Activated CD4-positive, alpha-beta memory T cell treated with anti-CD3 and anti-CD28 coated beads for 36 hours (primary cell): ENCODE measurements at regions of chr9 and their contacts with region 1.

Region 1: GRCh38 chr9:128370826-128371621 is at the start of gene URM1:
- DNase-seq: peak; percentile 98
- H3K4me3 Mint-ChIP-seq: peak within 1 kb of the TSS; percentile 99
- H3K27ac Mint-ChIP-seq: peak within 1 kb of the TSS; percentile 93
- H3K4me1 Mint-ChIP-seq: peaks cover 27% of the 10 kb centered on the region
- H3K27me3 Mint-ChIP-seq: no peaks in the 10 kb centered on the region
- total RNA-seq, gene URM1: 45.9 to 50.0 TPM

Region 2: DNA sequence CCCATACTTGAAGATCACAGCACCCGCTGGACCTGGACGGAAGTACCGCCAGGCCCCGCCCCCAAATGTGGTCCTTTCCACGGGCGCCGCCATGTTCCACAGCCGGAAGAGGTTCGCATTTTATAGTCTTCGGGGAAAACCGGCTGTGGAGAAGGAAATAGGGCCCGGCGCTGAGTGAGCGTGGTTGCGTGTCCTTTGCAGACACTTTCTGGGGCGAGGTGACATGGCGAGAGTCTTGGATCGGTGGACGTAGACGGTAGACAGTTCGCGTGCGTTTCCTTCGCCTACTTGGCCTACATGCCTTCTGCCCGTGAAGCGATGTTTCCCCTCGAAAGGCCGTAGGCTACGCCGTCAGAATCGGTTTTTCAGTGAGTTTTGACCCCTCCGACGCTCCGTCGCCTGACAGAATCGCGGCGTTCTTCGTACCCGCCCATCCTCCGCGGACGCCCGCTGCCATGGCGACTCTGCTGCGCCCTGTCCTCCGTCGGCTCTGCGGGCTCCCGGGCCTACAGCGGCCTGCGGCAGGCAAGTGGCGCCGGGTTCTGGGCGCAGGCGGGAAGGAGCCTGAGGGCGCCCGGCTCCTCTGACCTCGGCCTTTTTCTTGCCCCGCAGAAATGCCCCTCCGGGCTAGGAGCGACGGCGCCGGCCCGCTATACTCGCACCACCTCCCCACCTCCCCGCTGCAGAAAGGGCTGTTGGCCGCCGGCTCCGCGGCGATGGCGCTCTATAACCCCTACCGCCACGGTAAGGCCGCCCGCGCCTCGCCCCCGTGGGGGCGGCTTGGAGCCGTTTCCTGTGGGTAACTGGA is 48.4 kb before region 1 on chr9 and contains the starts of genes COQ4 and TRUB2:
- CTCF ChIA-PET with region 1: no interaction called
- POLR2A ChIA-PET with region 1: interaction called, 4 read pairs
- intact Hi-C with region 1: loop called (anchors 2 kb)
- DNase-seq: peak; percentile 95
- H3K4me3 Mint-ChIP-seq: peak within 1 kb of the TSS; percentile 85
- H3K27ac Mint-ChIP-seq: peak within 1 kb of the TSS; percentile 94
- H3K4me1 Mint-ChIP-seq: peaks cover 17% of the 10 kb centered on the region
- H3K27me3 Mint-ChIP-seq: no peaks in the 10 kb centered on the region
- total RNA-seq, gene COQ4: 33.0 to 35.5 TPM
- total RNA-seq, gene TRUB2: 27.2 to 27.4 TPM

Region 3: DNA sequence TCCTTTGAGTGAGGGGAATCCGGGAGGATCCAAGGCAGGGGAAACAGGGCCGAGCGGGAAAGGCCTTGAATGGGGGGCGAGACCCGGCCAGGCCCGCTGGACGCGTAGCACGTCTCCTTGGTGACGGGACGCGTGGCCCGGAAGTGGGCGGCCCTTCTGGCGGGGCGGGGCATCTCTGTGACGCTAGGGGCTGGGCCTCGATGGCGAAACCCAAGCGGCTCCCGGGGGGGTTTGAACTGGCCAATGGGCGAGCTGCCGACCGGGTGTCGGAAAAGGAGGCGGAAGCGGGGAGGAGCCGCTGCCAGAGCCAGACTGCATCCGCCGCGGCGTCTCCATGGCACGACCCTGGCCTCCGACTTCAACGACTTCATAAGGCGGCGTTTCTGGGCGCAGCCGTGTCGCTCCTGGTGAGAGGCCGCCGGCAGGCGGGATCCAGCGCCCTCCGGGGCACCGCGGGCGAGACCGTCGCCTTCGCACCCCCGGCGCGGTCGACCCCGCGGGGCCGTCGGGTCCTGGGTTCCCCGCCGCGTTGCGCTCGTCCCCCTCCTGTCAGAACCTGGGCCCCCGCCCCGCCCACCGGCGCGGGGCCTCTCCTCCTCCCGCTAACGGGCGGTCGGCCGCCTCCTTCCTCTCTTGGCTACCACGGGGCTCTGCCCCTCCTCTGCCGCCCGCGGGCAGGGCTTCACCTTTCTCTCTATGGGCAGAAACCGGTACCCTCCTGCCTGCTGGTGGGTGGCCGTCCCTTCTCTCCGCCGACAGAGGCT is 85.0 kb after region 1 on chr9 and contains the start of gene ODF2:
- CTCF ChIA-PET with region 1: no interaction called
- POLR2A ChIA-PET with region 1: no interaction called
- intact Hi-C with region 1: loop called (anchors 2 kb)
- DNase-seq: peak; percentile 99
- H3K4me3 Mint-ChIP-seq: peak within 1 kb of the TSS; percentile 85
- H3K27ac Mint-ChIP-seq: peak within 1 kb of the TSS; percentile 81
- H3K4me1 Mint-ChIP-seq: peaks cover 16% of the 10 kb centered on the region
- H3K27me3 Mint-ChIP-seq: no peaks in the 10 kb centered on the region
- total RNA-seq, gene ODF2: 68.9 to 72.8 TPM

Region 4: GRCh38 chr9:128688512-128689292 is 317.7 kb after region 1 on chr9 and contains the start of gene SET:
- CTCF ChIA-PET with region 1: no interaction called
- POLR2A ChIA-PET with region 1: no interaction called
- intact Hi-C with region 1: loop called (anchors 2 kb)
- DNase-seq: peak; percentile 95
- H3K4me3 Mint-ChIP-seq: peak within 1 kb of the TSS; percentile 81
- H3K27ac Mint-ChIP-seq: peak within 1 kb of the TSS; percentile 95
- H3K4me1 Mint-ChIP-seq: peaks cover 54% of the 10 kb centered on the region
- H3K27me3 Mint-ChIP-seq: no peaks in the 10 kb centered on the region
- total RNA-seq, gene SET: 578 to 592 TPM